Activated B cell treated with CpG ODN at 0.5 μM for 24 hours (primary cell): ENCODE measurements at regions of chr5 and their contacts with region 1.

Region 1: DNA sequence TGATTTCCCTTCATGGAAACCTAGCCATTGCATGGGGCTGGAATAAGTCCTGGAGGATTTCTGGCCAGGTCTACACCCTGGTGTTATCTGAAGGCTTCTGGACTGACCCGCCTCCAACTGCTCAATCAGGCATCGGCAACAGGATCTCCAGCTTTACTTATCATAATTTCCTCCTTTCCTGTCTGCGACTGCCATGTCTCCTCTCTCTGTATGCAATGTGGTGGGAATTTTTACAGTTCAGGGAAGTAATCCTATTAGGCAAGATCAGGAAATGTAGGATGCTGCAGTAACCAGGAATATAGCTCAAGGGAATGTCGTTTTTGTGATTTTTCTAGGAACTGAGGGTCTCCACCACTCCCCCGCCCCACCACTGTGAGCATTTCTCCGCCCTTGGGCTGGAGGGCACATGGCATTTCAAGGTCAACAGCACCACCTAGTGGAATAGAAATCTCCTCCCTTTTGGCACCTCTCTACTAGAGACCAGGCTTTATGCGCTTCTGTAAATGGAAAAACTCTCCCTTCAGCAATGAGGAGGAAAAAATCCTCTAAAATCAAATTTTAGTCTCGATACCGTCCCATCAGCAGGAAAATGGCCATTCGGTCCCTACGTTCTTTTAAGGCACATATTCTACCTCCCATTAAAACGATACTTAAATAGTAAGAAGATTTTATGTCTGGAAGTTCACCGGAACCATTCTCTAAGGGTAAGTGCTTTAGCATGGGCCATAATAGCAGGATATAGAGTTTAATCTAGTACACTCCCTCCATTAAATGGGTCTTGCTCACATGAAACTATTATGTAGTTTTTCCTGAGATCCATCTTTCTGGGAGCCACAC is 93.0 kb downstream of the YTHDC2 start:
- DNase-seq: no peak
- ATAC-seq: peak; percentile 73
- H3K4me3 Mint-ChIP-seq: no peak overlapping the region
- H3K27ac Mint-ChIP-seq: no peak overlapping the region
- H3K4me1 Mint-ChIP-seq: no peaks in the 10 kb centered on the region
- H3K27me3 Mint-ChIP-seq: peaks cover 30% of the 10 kb centered on the region
- CTCF ChIP-seq: peak; percentile 61

Region 2: DNA sequence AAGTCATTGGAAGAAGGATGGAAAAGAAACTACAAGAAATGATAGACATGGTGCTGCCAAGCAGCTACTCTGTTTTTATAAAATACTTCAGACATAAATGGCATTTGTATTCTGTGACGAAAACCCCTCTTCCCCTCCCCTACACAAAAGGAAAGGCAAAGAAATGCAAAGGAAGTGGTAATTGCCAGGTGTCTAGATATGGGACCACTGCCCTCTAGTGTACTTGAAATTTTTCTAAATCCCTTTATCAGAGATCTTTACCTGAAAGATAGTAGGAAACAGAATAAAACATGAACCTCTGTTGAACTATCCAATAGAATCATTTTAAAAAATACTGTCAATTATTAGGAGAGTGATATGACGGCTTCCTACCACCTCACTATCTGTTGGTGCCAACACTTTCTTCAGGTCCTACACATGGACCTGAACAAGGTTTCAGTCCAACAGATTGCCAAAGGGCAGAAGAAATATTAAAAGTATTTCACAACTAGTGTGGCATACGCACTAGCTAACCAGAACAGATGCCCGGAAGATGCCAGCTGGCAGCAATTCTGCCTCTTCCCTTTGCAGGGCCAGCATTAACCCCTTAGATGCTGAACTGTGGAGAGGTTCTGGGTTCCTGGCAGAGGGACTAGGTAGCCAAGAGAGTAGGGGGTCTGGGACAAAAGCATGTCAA is 275.8 kb before region 1 on chr5:
- CTCF ChIA-PET with region 1: no interaction called
- POLR2A ChIA-PET with region 1: no interaction called
- intact Hi-C with region 1: loop called (anchors 5 kb)
- DNase-seq: no peak
- ATAC-seq: peak; percentile 57
- H3K4me3 Mint-ChIP-seq: no peak overlapping the region
- H3K27ac Mint-ChIP-seq: no peak overlapping the region
- H3K4me1 Mint-ChIP-seq: peaks cover 6% of the 10 kb centered on the region
- H3K27me3 Mint-ChIP-seq: peaks cover 4% of the 10 kb centered on the region
- CTCF ChIP-seq: no peak

Region 3: DNA sequence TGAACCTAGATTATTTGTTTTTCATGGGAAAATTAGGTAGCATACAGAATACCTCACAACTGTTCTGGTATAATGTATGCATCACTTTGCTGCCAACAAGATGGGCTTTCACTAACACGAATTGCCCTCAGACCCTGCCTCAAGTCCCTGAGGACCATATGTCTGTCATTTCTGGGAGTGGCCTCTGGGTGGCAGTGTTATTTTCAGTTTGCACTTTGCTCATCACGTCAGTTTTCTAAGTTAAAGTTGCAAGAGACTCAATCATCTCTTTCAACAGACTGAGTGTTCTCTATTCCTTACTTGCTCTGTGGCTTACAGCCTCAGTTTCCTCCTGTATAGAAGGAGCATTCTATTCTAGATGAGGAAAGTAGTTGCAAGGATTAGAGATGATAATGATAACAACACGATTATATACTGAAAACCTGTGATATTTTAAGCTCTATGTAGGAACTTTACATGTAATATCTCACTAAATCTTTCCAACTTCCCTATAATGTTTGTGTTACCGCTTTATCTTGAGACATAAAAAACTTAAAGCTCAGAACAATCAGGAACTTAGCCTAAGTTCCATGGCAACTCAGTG is 227.5 kb before region 1 on chr5:
- CTCF ChIA-PET with region 1: interaction called, 9 read pairs
- POLR2A ChIA-PET with region 1: no interaction called
- intact Hi-C with region 1: loop called (anchors 1 kb)
- DNase-seq: no peak
- ATAC-seq: peak; percentile 71
- H3K4me3 Mint-ChIP-seq: no peak overlapping the region
- H3K27ac Mint-ChIP-seq: no peak overlapping the region
- H3K4me1 Mint-ChIP-seq: peaks cover 5% of the 10 kb centered on the region
- H3K27me3 Mint-ChIP-seq: peaks cover 18% of the 10 kb centered on the region
- CTCF ChIP-seq: no peak